ENCODE measurements at regions of chr10 and their contacts with region 1.

Region 1: GRCh38 chr10:689433-690371 is at the start of gene DIP2C:
- DNase-seq: peak in 8 of 10 donors; percentile 35 to 80 (median 64)
- H3K4me3 ChIP-seq: peak within 1 kb of the TSS; percentile 59 to 94 (median 86)
- H3K27ac ChIP-seq: peak within 1 kb of the TSS; percentile 71 to 98 (median 94)
- H3K27me3 ChIP-seq: no peaks in the 10 kb centered on the region
- CTCF ChIP-seq: peak in 1 of 56 donors; percentile 4
- total RNA-seq, gene DIP2C: 39.6 to 102 (median 58.2) TPM

Region 2: GRCh38 chr10:451021-451471 is 238.7 kb before region 1 on chr10:
- intact Hi-C with region 1: loop called in 1 of 2 experiments (anchors 10 kb)
- DNase-seq: no peak
- H3K4me3 ChIP-seq: no peak overlapping the region
- H3K27ac ChIP-seq: peak overlapping the region in 24 of 59 donors; percentile 6 to 66 (median 22)
- H3K27me3 ChIP-seq: no peaks in the 10 kb centered on the region
- CTCF ChIP-seq: no peak

Region 3: DNA sequence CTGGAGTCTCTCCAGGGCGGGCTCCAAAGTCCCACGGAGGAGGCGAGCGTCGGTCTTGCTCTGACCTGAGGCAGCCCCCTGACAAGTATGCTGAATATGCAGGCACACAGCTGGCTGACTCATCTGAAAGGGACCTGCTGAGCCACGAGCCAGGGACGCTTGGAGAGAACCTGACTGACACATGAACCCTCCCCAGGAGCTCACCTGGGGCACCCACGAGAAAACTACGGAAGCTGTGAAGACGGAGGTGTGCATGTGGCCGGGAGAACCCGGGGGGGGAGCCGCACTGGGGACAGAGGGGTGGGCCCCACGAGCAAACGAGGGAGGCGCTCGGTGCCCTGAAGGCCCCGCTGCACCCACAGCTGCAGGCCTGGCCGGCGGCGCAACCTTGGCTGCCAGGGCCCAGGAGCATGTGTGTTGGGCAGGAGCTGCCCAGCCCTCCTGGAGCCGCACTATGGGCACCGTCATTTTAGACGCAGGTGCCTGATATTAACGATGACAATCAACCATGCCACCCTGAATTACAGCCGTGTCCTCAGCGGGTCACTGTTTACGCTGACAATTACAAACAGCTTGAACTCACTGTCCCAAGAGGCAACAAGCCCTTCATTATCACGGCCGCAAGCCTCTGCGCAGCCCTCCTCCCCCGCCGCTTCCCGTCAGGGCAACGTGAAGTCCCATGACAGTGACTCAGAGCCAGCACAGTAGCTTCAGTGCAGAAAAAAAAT is 64.9 kb before region 1 on chr10:
- intact Hi-C with region 1: loop called (anchors 2 kb)
- DNase-seq: peak; percentile 69 to 95 (median 94)
- H3K4me3 ChIP-seq: peak overlapping the region in 57 of 59 donors; percentile 6 to 68 (median 40)
- H3K27ac ChIP-seq: peak overlapping the region; percentile 83 to 100 (median 99)
- H3K27me3 ChIP-seq: no peaks in the 10 kb centered on the region
- CTCF ChIP-seq: peak in 9 of 56 donors; percentile 4 to 30 (median 15)

Region 4: GRCh38 chr10:649798-650440 is 39.8 kb before region 1 on chr10:
- intact Hi-C with region 1: loop called in 1 of 2 experiments (anchors 5 kb)
- DNase-seq: no peak
- H3K4me3 ChIP-seq: peak overlapping the region in 24 of 59 donors; percentile 0 to 41 (median 10)
- H3K27ac ChIP-seq: peak overlapping the region in 57 of 59 donors; percentile 23 to 92 (median 69)
- H3K27me3 ChIP-seq: no peaks in the 10 kb centered on the region
- CTCF ChIP-seq: no peak

Region 5: GRCh38 chr10:784403-785088 is 94.8 kb after region 1 on chr10:
- intact Hi-C with region 1: loop called in 1 of 2 experiments (anchors 10 kb)
- DNase-seq: peak; percentile 56 to 93 (median 80)
- H3K4me3 ChIP-seq: peak overlapping the region; percentile 26 to 75 (median 55)
- H3K27ac ChIP-seq: peak overlapping the region in 32 of 59 donors; percentile 2 to 80 (median 44)
- H3K27me3 ChIP-seq: peaks cover 0 to 5% (median 0%) of the 10 kb centered on the region in 45 donors
- CTCF ChIP-seq: peak in 25 of 56 donors; percentile 5 to 52 (median 20)